ENCODE measurements at regions of chr1 and their contacts with region 1.

Region 1: GRCh38 chr1:15975805-15976680 is at the start of gene ZBTB17:
- DNase-seq: peak; percentile 97
- ATAC-seq: peak; percentile 81
- H3K4me3 ChIP-seq: peak within 1 kb of the TSS; percentile 58 to 94 (median 88)
- H3K4me3 Mint-ChIP-seq: peak within 1 kb of the TSS; percentile 93
- H3K27ac ChIP-seq: peak within 1 kb of the TSS; percentile 70 to 86
- H3K27ac Mint-ChIP-seq: peak within 1 kb of the TSS; percentile 92
- H3K4me1 ChIP-seq: peaks cover 20 to 33% of the 10 kb centered on the region in 2 donors
- H3K4me1 Mint-ChIP-seq: peaks cover 35% of the 10 kb centered on the region
- H3K27me3 ChIP-seq: no peaks in the 10 kb centered on the region
- H3K27me3 Mint-ChIP-seq: no peaks in the 10 kb centered on the region
- CTCF ChIP-seq: no peak
- total RNA-seq, gene ZBTB17: 94.1 and 101 TPM in 2 replicates

Region 2: GRCh38 chr1:15957228-15958095 is 18.6 kb before region 1 on chr1:
- CTCF ChIA-PET with region 1: interaction called, 24 read pairs
- POLR2A ChIA-PET with region 1: interaction called, 10 read pairs
- intact Hi-C with region 1: no loop called
- DNase-seq: peak; percentile 11
- ATAC-seq: no peak
- H3K4me3 ChIP-seq: no peak overlapping the region
- H3K4me3 Mint-ChIP-seq: no peak overlapping the region
- H3K27ac ChIP-seq: no peak overlapping the region
- H3K27ac Mint-ChIP-seq: peak overlapping the region; percentile 20
- H3K4me1 ChIP-seq: peaks cover 15 to 17% of the 10 kb centered on the region in 2 donors
- H3K4me1 Mint-ChIP-seq: peaks cover 62% of the 10 kb centered on the region
- H3K27me3 ChIP-seq: no peaks in the 10 kb centered on the region
- H3K27me3 Mint-ChIP-seq: no peaks in the 10 kb centered on the region
- CTCF ChIP-seq: no peak